ENCODE measurements at regions of chr17 and their contacts with region 1.

Region 1: DNA sequence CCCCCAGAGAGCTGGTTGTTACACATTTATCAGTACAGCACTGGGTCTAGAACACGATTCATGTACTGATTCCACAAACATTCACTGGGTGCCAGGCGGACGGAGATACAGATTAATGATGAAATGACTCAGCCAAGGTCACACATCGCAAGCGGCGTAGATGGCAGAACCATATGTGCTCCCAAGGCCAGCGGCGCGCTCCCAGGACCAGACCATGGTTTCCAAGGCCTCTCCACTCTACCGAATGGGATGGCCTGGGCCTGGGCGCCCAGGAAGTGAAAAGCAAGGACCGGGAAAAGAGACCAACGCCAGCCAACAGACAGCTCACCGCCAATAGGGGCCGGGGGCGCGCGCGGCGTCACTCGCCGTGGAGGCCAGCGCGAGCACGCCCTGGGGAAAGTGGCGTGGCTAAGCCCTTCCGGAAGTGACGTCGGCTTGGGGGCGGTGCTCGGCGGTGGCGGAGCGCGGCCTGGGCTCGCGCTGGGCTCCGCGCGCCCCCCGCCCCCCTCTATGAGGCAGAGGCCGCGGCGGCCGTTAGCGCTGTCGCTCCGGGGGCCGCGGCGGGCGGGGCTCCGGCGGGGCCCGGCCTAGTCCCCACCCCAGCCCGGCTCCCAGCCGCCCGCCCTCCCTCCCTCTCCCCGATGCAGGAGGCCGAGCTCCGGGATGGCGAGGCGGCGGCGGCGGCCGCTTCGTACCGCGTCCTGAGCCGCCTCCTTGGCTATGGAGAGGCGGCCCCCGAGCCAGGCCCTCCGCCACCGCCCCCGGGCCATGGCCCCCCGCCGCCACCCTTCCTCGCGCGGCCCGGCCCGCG is at the start of gene SOCS7:
- DNase-seq: peak; percentile 100
- H3K4me3 Mint-ChIP-seq: peak within 1 kb of the TSS; percentile 76
- H3K27ac Mint-ChIP-seq: peak within 1 kb of the TSS; percentile 90
- H3K4me1 Mint-ChIP-seq: peaks cover 59% of the 10 kb centered on the region
- H3K27me3 Mint-ChIP-seq: no peaks in the 10 kb centered on the region
- CTCF ChIP-seq: peak; percentile 10
- total RNA-seq, gene SOCS7: 68.3 and 83.6 TPM in 2 replicates

Region 2: GRCh38 chr17:38328620-38329019 is 23.0 kb before region 1 on chr17:
- CTCF ChIA-PET with region 1: interaction called, 159 read pairs
- intact Hi-C with region 1: no loop called
- DNase-seq: no peak
- H3K4me3 Mint-ChIP-seq: no peak overlapping the region
- H3K27ac Mint-ChIP-seq: no peak overlapping the region
- H3K4me1 Mint-ChIP-seq: no peaks in the 10 kb centered on the region
- H3K27me3 Mint-ChIP-seq: peaks cover 56% of the 10 kb centered on the region
- CTCF ChIP-seq: no peak

Region 3: DNA sequence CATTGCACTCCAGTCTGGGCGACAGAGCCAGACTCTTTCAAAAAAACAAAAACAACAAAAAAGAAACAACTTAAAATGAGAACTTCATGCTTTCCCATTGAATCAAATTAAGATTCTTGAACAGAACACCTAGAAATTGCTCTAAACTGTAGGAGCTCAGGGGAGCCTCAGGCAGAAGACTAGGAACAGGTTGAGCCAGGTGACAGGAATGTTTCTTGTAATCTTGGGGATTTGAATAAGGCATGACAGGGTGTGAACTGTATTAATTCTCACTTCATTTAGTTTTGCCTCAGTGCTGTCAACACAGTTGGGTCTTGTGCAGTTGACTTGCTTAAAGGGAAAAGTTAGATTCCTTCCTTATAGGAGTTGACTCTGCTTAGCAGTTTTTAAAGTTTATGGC is 27.8 kb after region 1 on chr17:
- CTCF ChIA-PET with region 1: interaction called, 37 read pairs
- intact Hi-C with region 1: no loop called
- DNase-seq: no peak
- H3K4me3 Mint-ChIP-seq: no peak overlapping the region
- H3K27ac Mint-ChIP-seq: no peak overlapping the region
- H3K4me1 Mint-ChIP-seq: no peaks in the 10 kb centered on the region
- H3K27me3 Mint-ChIP-seq: no peaks in the 10 kb centered on the region
- CTCF ChIP-seq: no peak

Region 4: GRCh38 chr17:38415250-38416194 is 63.9 kb after region 1 on chr17:
- CTCF ChIA-PET with region 1: interaction called, 434 read pairs
- intact Hi-C with region 1: loop called (anchors 1 kb)
- DNase-seq: peak; percentile 76
- H3K4me3 Mint-ChIP-seq: peak overlapping the region; percentile 56
- H3K27ac Mint-ChIP-seq: peak overlapping the region; percentile 96
- H3K4me1 Mint-ChIP-seq: peaks cover 42% of the 10 kb centered on the region
- H3K27me3 Mint-ChIP-seq: peaks cover 62% of the 10 kb centered on the region
- CTCF ChIP-seq: no peak

Region 5: DNA sequence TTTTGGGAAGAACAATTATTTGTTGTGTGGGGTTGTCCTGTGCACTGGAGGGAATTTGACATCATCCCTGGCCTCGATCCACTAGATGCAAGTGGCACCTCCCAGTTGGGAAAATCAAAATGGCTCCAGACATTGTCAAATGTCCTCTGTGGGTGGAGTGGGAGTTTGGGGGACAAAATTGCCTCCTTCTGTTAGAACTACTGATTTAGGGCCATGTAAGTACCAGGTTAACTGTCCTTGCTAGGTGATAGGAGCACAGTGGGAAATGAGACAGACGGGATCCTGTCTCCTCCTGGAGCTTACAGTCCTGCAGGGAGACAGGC is 133.5 kb after region 1 on chr17:
- CTCF ChIA-PET with region 1: no interaction called
- intact Hi-C with region 1: loop called (anchors 5 kb)
- DNase-seq: no peak
- H3K4me3 Mint-ChIP-seq: no peak overlapping the region
- H3K27ac Mint-ChIP-seq: peak overlapping the region; percentile 0
- H3K4me1 Mint-ChIP-seq: peaks cover 23% of the 10 kb centered on the region
- H3K27me3 Mint-ChIP-seq: no peaks in the 10 kb centered on the region
- CTCF ChIP-seq: peak; percentile 20

Measured in Calu3 (cell line).